ENCODE measurements at regions of chr22 and their contacts with region 1.

Region 1: DNA sequence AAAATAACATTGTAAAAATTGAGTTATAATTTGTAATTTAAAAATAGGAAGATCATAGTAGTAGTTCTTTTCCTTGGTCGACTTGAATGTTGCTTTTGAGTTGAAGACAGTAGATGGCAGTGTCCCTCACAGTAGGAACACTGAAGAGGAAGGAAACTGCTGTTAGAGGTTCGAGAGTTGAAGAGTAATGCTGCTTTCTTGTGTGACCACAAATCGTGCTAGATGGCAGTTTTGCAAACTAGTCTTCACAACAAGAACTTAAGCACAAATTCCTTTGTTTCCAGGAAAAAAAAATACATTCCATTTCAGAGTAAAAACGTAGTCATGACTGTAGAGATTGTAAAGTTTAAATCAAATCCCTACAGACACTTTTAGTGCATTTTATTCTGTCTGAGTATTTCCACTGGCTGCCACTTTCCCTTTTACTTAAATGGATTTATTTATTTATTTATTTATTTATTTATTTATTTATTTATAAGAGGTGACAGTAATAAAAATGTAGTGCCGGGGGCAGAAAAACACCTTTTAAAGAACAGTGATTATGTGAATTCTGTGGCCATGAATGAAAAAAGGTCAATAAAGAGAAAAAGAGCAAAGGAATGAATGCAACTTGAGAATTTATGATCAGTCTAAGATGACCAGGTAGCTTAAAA is 54.6 kb downstream of the SPECC1L start:
- DNase-seq: no peak
- ATAC-seq: peak; percentile 71

Region 2: GRCh38 chr22:24516301-24516737 is 191.1 kb after region 1 on chr22:
- intact Hi-C with region 1: loop called (anchors 10 kb)
- DNase-seq: no peak
- ATAC-seq: no peak